HepG2 (cell line): ENCODE measurements at regions of chr4 and their contacts with region 1.

Region 1: DNA sequence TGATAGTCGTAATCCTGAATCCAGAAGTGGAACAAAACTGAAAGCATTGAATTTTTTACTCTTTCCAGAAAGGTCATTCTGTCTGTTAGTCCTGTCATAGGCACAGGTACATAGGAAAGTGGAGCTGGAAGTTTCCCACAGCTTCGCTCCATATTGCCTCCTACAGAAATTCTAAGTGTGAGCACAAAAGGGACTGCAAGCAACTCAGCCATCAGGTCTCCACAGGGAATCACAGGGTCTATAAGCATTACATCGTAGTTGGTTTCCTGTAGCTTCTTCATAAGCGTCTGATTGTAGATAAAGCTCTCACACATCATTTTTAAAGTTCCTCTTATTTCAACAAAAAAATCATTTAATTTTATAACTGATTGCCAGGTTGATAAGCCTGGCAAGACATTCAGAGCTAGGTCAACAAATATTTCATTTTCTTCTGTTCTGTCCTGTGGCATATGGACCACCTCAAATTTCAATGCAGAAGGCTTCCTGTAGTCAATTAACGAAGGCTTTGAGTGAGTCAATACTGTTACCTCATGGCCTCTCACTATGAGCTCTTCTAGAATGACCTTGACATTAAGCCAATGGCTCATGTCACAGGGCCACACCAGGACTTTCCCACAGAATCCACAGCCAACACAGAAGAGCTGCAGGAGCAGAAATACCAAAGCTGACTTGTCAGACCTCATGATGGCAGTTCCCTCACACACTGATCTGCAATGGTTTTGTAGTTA is at the start of gene UGT2A3:
- DNase-seq: peak; percentile 99
- ATAC-seq: peak; percentile 91
- H3K4me3 ChIP-seq: peak within 1 kb of the TSS; percentile 59 to 93 (median 70); a peak in 5 of 6 replicates
- H3K27ac ChIP-seq: peak within 1 kb of the TSS; percentile 92
- H3K4me1 ChIP-seq: peaks cover 77% of the 10 kb centered on the region
- H3K27me3 ChIP-seq: no peaks in the 10 kb centered on the region
- CTCF ChIP-seq: peak; percentile 30
- EP300 ChIP-seq: peak; percentile 44 to 85; a peak in 2 of 4 replicates
- POLR2A ChIP-seq: peak; percentile 69 to 88
- RAD21 ChIP-seq: no peak
- total RNA-seq, gene UGT2A3: 74.1 and 97.2 TPM in 2 replicates

Region 2: GRCh38 chr4:68820770-68821169 is 130.5 kb before region 1 on chr4:
- CTCF ChIA-PET with region 1: no interaction called
- POLR2A ChIA-PET with region 1: interaction called, 18 read pairs
- in situ Hi-C with region 1: no loop called
- intact Hi-C with region 1: loop called (anchors 5 kb)
- DNase-seq: no peak
- ATAC-seq: no peak
- H3K4me3 ChIP-seq: no peak overlapping the region
- H3K27ac ChIP-seq: no peak overlapping the region
- H3K4me1 ChIP-seq: peaks cover 77% of the 10 kb centered on the region
- H3K27me3 ChIP-seq: no peaks in the 10 kb centered on the region
- CTCF ChIP-seq: no peak
- EP300 ChIP-seq: no peak
- POLR2A ChIP-seq: no peak
- RAD21 ChIP-seq: no peak

Region 3: GRCh38 chr4:68850293-68850692 is 100.9 kb before region 1 on chr4:
- CTCF ChIA-PET with region 1: no interaction called
- POLR2A ChIA-PET with region 1: no interaction called
- in situ Hi-C with region 1: no loop called
- intact Hi-C with region 1: no loop called
- DNase-seq: no peak
- ATAC-seq: no peak
- H3K4me3 ChIP-seq: no peak overlapping the region
- H3K27ac ChIP-seq: no peak overlapping the region
- H3K4me1 ChIP-seq: no peaks in the 10 kb centered on the region; the same call in 1 of the 2 replicates
- H3K27me3 ChIP-seq: no peaks in the 10 kb centered on the region
- CTCF ChIP-seq: no peak
- EP300 ChIP-seq: no peak
- POLR2A ChIP-seq: no peak
- RAD21 ChIP-seq: no peak

Region 4: DNA sequence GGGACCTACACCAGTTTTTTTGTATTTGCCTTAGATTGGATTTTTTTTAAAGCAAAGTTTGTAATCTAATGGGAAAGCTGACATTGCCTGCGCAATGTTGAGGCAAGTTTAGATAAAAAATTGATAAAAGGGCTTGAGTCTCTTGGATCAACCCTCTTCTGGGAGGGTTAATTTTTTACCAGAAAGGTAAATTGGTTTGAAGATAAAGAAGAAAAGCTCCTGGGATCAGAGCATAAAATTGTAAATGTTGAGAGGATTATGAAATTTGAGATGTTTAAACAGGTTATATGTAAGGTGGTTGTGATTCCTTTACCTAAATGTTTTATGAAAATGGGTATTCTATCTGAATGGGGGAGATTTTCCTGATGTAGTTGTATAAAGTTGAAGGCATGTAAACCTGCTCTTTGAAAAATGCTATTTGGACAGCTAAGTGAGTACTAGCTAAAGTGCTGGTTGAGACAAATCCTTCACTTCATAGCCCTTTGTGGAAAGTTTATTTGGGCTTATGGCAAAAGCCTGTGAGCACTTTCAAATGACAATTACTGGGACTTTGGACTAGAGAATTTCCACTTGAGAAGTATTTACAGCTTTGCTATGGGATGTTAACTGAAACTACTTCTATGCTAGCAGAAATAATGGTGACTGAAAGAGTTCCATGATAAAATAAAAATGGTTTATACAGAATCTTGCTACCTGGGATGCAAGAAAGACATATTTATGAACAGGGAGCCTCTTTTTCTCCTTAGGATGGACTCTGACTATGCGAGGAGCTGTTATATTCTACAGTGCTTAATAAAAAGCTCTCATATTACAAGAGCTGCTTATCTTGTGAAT is 79.2 kb before region 1 on chr4:
- CTCF ChIA-PET with region 1: no interaction called
- POLR2A ChIA-PET with region 1: interaction called, 39 read pairs
- in situ Hi-C with region 1: no loop called
- intact Hi-C with region 1: loop called (anchors 1 kb)
- DNase-seq: peak; percentile 91
- ATAC-seq: peak; percentile 92
- H3K4me3 ChIP-seq: peak overlapping the region in 2 of 3 experiments; percentile 47 to 55; a peak in 3 of 6 replicates
- H3K27ac ChIP-seq: peak overlapping the region; percentile 85
- H3K4me1 ChIP-seq: peaks cover 59% of the 10 kb centered on the region
- H3K27me3 ChIP-seq: no peaks in the 10 kb centered on the region
- CTCF ChIP-seq: no peak
- EP300 ChIP-seq: peak in 1 of 2 experiments; percentile 90; a peak in 2 of 4 replicates
- POLR2A ChIP-seq: no peak; a peak in 1 of 4 replicates
- RAD21 ChIP-seq: peak; percentile 11; the same call in 1 of the 2 replicates

Region 5: GRCh38 chr4:68984947-68985346 is 33.7 kb after region 1 on chr4:
- CTCF ChIA-PET with region 1: no interaction called
- POLR2A ChIA-PET with region 1: no interaction called
- in situ Hi-C with region 1: no loop called
- intact Hi-C with region 1: no loop called
- DNase-seq: no peak
- ATAC-seq: no peak
- H3K4me3 ChIP-seq: no peak overlapping the region
- H3K27ac ChIP-seq: no peak overlapping the region
- H3K4me1 ChIP-seq: no peaks in the 10 kb centered on the region
- H3K27me3 ChIP-seq: no peaks in the 10 kb centered on the region
- CTCF ChIP-seq: no peak
- EP300 ChIP-seq: no peak
- POLR2A ChIP-seq: no peak
- RAD21 ChIP-seq: no peak

Region 6: GRCh38 chr4:69025191-69025998 is 74.2 kb after region 1 on chr4:
- CTCF ChIA-PET with region 1: no interaction called
- POLR2A ChIA-PET with region 1: interaction called, 16 read pairs
- in situ Hi-C with region 1: no loop called
- intact Hi-C with region 1: loop called (anchors 1 kb)
- DNase-seq: peak; percentile 68
- ATAC-seq: peak; percentile 94
- H3K4me3 ChIP-seq: no peak overlapping the region
- H3K27ac ChIP-seq: peak overlapping the region; percentile 45
- H3K4me1 ChIP-seq: peaks cover 65% of the 10 kb centered on the region
- H3K27me3 ChIP-seq: no peaks in the 10 kb centered on the region
- CTCF ChIP-seq: peak; percentile 81
- EP300 ChIP-seq: peak in 1 of 2 experiments; percentile 1; a peak in 1 of 4 replicates
- POLR2A ChIP-seq: no peak
- RAD21 ChIP-seq: peak; percentile 76

Region 7: GRCh38 chr4:69095301-69095731 is 144.1 kb after region 1 on chr4:
- CTCF ChIA-PET with region 1: no interaction called
- POLR2A ChIA-PET with region 1: interaction called, 11 read pairs
- in situ Hi-C with region 1: no loop called
- intact Hi-C with region 1: loop called (anchors 1 kb)
- DNase-seq: peak; percentile 89
- ATAC-seq: peak; percentile 72
- H3K4me3 ChIP-seq: no peak overlapping the region; a peak in 1 of 6 replicates
- H3K27ac ChIP-seq: peak overlapping the region; percentile 72
- H3K4me1 ChIP-seq: peaks cover 61% of the 10 kb centered on the region
- H3K27me3 ChIP-seq: no peaks in the 10 kb centered on the region
- CTCF ChIP-seq: no peak
- EP300 ChIP-seq: peak in 1 of 2 experiments; percentile 97; a peak in 2 of 4 replicates
- POLR2A ChIP-seq: no peak
- RAD21 ChIP-seq: no peak

Region 8: GRCh38 chr4:69568787-69569186 is 617.5 kb after region 1 on chr4:
- CTCF ChIA-PET with region 1: no interaction called
- POLR2A ChIA-PET with region 1: no interaction called
- in situ Hi-C with region 1: no loop called
- intact Hi-C with region 1: no loop called
- DNase-seq: no peak
- ATAC-seq: no peak
- H3K4me3 ChIP-seq: no peak overlapping the region
- H3K27ac ChIP-seq: no peak overlapping the region
- H3K4me1 ChIP-seq: no peaks in the 10 kb centered on the region
- H3K27me3 ChIP-seq: no peaks in the 10 kb centered on the region; a peak in 1 of 5 replicates
- CTCF ChIP-seq: no peak
- EP300 ChIP-seq: no peak
- POLR2A ChIP-seq: no peak
- RAD21 ChIP-seq: no peak